ENCODE measurements at regions of chr3 and their contacts with region 1.

Region 1: GRCh38 chr3:149808209-149808829 is 4.7 kb upstream of the RNF13 start:
- DNase-seq: peak; percentile 58
- CTCF ChIP-seq: peak; percentile 88

Region 2: DNA sequence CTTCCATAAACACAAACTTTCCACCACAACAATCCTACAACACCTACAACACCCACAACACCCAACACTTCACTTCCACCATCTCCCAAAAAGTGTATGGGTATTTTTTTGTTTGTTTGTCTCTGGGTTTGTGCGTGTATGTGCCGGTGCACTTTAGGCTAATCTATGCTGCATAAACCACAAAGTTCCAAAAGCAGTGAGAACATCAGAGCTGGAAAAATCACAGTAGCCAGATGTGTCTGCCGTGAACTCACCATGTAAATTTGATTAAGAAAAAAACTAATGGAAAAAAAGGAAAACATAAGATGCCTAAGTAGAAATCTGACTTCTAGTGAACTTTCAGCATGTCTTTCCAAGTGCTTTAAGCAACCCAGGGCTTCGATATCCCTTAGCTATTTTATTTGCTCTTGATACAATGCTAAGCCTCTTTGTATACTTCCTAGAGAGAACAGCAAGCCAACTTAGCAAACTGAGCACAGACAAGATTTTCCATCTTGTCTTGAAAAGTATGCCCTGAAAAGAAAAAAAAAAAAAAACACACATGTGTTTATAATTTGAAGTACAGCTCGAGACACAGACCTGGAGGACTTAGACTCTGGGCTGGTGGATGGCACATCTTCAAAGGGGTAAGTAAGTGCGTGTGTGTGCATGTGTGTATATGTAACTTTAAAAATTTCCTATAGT is 241.9 kb before region 1 on chr3:
- CTCF ChIA-PET with region 1: interaction called, 13 read pairs
- POLR2A ChIA-PET with region 1: no interaction called
- DNase-seq: no peak
- CTCF ChIP-seq: no peak

Region 3: GRCh38 chr3:149603126-149604074 is 204.9 kb before region 1 on chr3:
- CTCF ChIA-PET with region 1: no interaction called
- POLR2A ChIA-PET with region 1: no interaction called
- DNase-seq: no peak
- CTCF ChIP-seq: no peak

Region 4: DNA sequence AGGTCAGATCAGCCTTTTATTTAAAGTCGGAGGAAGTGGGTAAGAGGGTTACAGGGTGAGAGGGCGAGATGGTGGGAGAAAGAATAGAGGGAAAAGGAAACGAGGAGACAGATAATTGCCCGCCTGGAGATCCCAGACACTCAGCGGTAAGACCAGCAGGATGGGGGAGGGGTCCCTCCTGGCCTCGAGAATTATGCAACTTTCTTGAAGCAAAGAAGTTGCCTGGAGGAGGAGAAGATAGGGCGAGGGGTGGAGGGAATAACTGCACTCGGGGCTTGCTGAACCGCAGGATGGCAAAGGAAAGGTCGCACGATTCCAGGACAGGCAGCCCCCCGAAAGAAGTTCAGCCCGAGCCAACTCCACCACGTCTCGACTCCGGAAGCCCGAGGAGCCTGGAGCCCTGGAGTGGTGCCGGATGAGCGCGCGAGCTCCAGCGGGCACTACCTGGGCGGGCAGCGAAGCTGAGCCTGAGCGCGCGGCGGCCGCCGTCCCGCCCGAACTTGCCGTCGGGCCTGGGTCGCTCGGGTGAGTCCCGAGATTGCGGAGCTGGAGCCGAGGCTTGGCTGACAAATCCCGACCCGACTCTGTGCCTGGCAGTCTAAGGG is 150.9 kb before region 1 on chr3:
- CTCF ChIA-PET with region 1: no interaction called
- POLR2A ChIA-PET with region 1: no interaction called
- DNase-seq: no peak
- CTCF ChIP-seq: no peak

Region 5: DNA sequence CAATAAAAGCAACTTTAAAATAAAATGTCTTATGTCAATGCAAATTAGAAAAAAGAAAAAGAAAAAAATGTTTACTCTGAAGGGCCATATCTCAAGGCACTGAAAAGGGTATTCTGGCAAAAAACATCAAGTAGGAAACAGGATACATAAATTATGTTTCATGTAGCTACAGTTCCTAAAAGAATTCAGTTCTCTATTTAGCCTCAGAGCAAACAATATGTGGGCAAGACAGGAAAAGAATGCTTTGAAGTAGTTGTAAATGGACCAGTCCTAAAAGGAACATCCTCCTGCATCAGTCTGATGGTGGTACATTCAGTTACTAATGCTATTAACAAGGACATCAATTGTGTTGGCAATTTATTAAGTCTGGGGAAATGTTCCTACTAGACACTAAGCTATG is 64.2 kb before region 1 on chr3:
- CTCF ChIA-PET with region 1: no interaction called
- POLR2A ChIA-PET with region 1: no interaction called
- DNase-seq: no peak
- CTCF ChIP-seq: no peak

Region 6: GRCh38 chr3:149765762-149766334 is 42.5 kb before region 1 on chr3:
- CTCF ChIA-PET with region 1: interaction called, 60 read pairs
- POLR2A ChIA-PET with region 1: no interaction called
- DNase-seq: peak; percentile 16
- CTCF ChIP-seq: peak; percentile 34

Region 7: DNA sequence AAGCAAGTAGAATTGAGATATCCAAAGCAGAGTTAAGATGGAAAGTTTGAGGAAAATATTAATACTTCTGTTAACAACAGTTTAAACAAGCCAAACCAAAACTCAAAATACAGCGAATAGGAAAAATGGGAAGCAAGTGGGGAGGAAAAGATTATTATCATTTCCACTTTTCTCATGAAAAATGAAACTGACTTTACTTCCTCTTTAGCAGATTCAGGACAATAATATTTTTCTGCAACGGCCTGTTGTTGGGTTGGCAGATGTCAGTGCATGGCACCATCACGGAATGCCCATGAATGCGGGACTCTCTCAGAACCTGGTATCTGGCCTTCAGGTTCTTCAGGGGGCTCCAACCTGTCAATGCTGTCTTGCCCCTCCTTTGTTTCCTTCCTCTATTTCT is 27.1 kb before region 1 on chr3:
- CTCF ChIA-PET with region 1: interaction called, 60 read pairs
- POLR2A ChIA-PET with region 1: no interaction called
- DNase-seq: no peak
- CTCF ChIP-seq: no peak

Region 8: GRCh38 chr3:149826636-149827035 is 18.3 kb after region 1 on chr3:
- CTCF ChIA-PET with region 1: interaction called, 33 read pairs
- POLR2A ChIA-PET with region 1: interaction called, 3 read pairs
- DNase-seq: no peak
- CTCF ChIP-seq: no peak

Region 9: GRCh38 chr3:149902498-149903139 is 94.3 kb after region 1 on chr3:
- CTCF ChIA-PET with region 1: interaction called, 10 read pairs
- POLR2A ChIA-PET with region 1: no interaction called
- DNase-seq: no peak
- CTCF ChIP-seq: no peak